Left cardiac atrium (tissue), 4 donors: ENCODE measurements at regions of chr6 and their contacts with region 1.

Region 1: GRCh38 chr6:593139-593906 is 63.6 kb downstream of the HUS1B start:
- DNase-seq: peak; percentile 52
- ATAC-seq: peak; percentile 27 to 40

Region 2: DNA sequence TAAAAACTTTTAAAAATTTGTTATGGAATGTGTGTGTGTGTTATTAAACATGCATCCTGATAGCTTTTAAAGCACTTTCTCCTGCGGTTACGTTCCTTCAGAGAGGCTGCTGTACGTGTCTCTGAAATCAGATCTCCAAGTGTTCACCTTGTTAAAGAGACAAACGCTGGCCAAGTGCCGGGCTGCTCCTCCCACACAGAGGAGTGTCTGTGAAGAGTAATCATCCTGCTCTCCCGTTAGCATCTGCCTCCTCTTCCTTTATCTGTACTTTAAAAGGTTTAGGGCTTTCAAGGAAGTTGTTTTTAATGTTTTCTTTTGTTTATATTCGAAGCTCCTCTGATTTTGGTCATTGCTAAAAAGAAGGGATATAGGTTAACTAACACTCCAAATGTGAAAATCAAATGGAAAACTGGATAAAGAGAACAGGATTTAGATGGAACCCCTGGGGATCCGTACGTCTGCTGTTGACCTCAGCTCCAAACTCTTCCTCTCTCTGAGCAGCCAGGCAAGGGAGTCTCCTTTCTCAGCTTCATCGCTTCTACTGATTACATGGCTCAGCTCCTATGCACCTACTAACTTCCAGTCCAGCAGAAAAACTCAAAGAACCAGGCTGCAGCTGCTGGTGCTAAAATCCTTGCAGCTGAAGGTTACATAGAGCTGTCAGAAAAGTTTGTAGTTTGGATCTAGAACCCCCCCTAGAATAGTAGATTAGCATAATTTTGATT is 181.7 kb before region 1 on chr6:
- intact Hi-C with region 1: no loop called
- DNase-seq: no peak
- ATAC-seq: peak in 1 of 2 donors; percentile 63

Region 3: DNA sequence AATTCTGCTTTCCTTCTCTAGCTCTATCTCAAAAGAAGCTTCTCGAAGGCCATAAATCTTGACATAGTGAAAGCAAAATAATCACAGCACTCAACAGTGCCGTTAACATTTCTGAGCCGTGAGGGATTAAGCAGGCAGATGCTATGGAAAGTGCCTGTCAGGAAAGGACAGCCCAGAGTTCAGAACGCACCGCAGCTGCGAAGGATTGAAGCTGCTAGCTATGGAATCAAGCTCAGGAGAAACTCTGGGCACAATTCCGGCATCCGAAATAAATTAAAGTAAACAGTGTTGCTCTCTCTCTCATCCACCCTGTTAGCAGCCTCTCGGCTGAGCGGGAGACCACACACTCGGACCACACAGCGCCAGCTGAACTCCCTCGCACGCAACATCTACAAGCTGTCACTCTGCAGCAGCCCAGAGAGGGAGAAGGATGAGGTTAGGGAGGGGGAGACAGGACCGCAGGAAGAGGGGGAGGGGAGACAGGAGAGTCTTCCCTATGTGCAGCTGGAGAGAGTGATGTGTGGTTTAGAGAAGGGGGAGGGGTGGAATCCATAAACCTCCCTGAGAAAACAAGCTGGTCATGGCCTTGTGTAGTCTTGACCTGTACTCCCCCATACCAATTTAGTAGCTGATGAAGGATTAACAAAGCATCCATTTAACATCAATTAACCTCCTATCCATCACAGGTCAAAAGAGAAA is 90.6 kb after region 1 on chr6:
- intact Hi-C with region 1: no loop called
- DNase-seq: no peak
- ATAC-seq: peak; percentile 47 to 79

Region 4: DNA sequence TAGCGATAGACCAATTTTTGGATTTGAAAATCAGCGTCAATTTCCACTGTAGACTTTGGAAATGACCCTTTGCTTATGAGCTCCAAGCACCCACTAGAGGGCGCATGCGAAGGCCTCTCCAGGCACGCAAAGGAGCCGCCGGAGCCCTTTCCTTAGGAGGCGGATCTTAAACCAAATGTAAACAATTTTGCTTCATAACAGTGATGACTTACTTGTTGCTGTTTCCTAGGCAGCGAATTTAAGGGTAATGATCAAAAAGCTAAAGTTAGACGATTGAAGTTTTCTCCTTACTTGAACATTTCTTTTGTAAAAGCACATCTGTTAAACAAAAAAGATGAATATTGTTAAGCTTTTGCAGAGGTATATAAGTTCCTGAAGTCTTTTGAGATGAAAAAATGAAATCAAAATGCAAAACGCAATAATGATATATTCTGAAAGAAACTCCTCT is 128.8 kb after region 1 on chr6:
- intact Hi-C with region 1: loop called in 1 of 2 experiments (anchors 10 kb)
- DNase-seq: peak; percentile 81
- ATAC-seq: peak; percentile 67 to 73

Region 5: DNA sequence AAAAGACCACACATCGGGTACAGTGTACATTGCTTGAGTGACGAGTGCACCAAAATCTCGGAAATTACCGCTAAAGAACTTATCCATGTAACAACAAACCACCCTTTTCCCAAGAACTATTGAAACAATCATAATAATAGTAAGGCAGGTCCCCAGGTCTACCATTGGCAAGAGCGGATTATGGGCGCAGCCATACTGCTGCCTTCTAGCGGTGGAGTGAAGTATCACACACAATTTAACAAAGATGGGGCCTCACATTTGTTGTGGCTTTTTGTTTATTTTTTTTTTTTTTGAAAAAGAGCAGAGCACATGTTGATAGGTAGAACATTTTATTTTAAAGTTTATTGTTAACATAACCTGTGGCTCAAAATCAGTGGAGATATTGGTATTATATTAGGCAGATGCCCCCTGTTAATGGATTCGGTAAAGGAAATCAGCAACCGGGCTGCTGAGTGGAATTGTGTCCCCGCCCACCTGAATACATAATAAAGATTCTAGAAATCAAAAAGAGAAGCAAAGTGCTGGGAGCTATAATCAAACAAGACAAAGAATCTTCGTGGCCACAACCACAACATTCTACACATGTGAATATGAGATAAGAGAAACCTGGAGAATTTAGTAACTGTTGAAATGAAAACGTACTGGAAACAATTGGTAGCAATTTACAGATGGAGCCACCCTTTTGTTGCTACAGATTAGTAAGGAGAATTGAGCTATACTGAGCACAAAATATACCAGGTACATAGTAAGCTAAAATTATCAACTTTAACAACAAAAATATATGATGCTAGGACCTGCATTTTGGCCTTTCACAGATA is 193.8 kb after region 1 on chr6:
- intact Hi-C with region 1: loop called in 1 of 2 experiments (anchors 5 kb)
- DNase-seq: no peak
- ATAC-seq: no peak

Region 6: DNA sequence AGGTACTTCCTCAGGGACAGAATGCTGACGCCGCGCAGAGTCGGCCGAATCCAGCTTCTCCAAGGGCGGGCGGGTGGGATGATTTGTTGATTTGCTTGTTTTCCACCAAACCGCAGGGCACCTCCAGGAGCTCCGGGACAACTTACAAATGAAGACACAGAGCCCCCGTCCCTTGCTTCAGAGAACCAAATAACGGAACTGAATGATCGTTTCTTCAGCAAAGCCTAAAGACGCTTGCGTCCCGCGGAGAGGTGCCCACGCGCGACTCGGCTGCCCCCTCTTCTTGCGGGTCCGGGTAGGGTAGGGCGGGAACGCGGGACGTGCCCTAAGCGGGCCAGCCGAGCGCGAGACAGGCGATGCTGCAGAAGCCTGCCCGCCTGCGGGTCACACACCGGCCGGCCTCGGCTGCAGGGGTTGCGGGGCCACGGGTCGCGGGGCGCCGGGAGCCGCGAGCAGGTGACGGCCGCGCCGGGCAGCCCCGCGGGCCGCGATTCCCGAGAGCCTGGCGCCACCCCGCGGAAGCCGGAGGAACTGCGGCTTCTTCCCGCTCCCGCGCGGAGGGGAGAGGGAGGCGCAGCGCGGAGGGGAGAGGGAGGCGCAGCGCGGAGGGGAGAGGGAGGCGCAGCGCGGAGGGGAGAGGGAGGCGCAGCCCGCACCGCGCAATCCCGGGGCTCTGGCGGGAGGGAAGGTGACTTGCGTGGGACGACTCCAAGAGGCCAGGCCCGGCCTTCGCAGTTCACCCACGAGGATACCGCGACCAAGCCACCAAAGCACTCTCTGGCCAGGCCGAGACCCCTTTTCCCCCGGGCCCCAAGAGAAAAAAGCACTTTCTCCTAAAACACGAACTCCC is 788.4 kb after region 1 on chr6:
- intact Hi-C with region 1: loop called in 1 of 2 experiments (anchors 5 kb)
- DNase-seq: peak; percentile 50
- ATAC-seq: peak; percentile 83 to 84

Region 7: DNA sequence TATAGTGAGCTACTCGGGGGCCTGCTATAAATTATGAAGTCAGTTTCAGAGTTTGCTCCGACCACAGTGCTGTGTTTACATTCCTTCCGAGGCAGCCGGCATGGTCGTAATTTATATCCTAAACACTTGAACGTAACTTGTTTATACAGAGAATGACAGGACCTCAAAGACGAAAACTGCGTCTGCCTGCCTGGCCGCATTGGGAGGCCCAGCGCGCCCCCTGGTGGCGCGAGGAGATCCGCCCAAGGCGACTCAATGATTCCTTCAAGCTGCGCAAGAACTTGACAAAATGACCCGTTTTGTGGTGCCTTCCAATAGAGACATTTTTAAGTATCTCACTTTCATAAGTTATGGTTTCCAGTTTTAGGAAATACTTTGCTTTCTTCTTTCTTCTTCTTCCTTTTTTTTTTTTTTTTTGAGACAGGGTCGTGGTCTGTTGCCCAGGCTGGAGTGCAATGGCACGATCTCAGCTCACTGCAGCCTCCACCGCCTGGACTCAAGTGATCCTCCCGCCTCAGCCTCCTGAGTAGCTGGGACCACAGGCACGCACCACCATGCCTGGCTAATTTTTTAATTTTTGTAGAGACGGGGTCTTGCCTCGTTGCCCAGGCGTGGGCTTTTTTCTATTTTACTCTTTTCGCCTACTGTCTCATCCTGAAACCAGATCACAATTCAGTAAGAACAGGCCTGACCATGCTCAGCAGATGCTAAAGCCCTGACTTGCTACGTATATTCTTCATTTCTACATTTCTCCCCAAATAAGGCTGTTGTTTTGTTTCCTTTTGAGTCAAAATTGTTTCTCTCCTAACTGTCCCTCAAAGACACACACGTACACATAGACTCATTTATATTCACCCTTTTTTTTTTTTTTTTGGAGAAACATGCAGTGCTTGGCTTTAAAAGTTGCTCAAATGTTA is 803.9 kb after region 1 on chr6:
- intact Hi-C with region 1: loop called in 1 of 2 experiments (anchors 10 kb)
- DNase-seq: peak; percentile 69
- ATAC-seq: peak; percentile 65 to 67